Sigmoid colon (tissue), 7 donors: ENCODE measurements at regions of chr19 and their contacts with region 1.

Region 1: DNA sequence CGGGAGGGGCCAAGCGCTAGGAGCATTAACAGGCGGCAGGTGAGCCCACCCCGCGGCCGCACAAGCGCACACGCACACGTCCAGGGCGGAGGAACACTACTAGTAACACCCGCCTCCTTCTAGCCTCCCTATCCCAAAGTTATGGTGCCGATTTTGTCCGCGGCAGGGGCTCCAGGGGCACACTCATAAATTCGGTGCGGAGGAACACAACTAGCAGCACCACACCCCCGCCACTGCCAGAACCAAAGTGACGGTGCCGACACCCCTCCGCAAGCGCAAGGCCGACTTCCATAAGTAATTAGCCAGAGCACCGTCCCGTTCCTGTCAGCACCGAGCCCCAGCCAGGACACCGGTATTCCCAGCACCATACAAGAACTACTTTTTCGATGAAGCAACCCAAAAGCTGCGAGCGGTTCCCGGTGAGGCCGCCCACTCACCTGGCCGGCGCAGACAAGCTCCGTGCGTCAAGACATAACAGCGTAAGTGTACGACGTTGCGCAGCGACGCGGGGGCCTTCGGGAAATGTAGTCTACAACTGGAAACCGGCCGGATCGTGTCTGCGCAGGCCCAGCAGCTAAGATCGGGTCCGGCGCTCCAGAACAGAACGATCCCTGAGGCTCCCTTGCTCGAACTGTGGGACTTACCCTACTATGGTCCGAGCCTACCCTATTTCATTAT is at the starts of genes ZNF540 and ZNF571:
- DNase-seq: peak; percentile 97
- H3K4me3 ChIP-seq: peak within 1 kb of the TSS; percentile 53 to 88 (median 69)
- H3K27ac ChIP-seq: peak within 1 kb of the TSS; percentile 90 to 92 (median 92)
- H3K4me1 ChIP-seq: peaks cover 0 to 18% (median 17%) of the 10 kb centered on the region in 4 donors
- H3K27me3 ChIP-seq: no peaks in the 10 kb centered on the region
- CTCF ChIP-seq: no peak
- EP300 ChIP-seq: peak in 1 of 4 donors; percentile 88
- POLR2A ChIP-seq: peak; percentile 57 to 64
- total RNA-seq, gene ZNF540: 6.4 to 8.0 (median 7.1) TPM
- total RNA-seq, gene ZNF571: 3.1 to 11.4 (median 5.2) TPM

Region 2: GRCh38 chr19:37506387-37507166 is 87.9 kb before region 1 on chr19 and contains the start of gene ZNF793:
- intact Hi-C with region 1: loop called (anchors 5 kb)
- DNase-seq: peak; percentile 90
- H3K4me3 ChIP-seq: peak within 1 kb of the TSS; percentile 61 to 71 (median 67)
- H3K27ac ChIP-seq: peak within 1 kb of the TSS; percentile 88 to 95 (median 92)
- H3K4me1 ChIP-seq: peaks cover 0 to 15% (median 9%) of the 10 kb centered on the region in 4 donors
- H3K27me3 ChIP-seq: no peaks in the 10 kb centered on the region
- CTCF ChIP-seq: no peak
- EP300 ChIP-seq: no peak
- POLR2A ChIP-seq: peak in 1 of 2 donors; percentile 47
- total RNA-seq, gene ZNF793: 2.9 to 6.1 (median 5.4) TPM

Region 3: GRCh38 chr19:37551129-37551993 is 43.1 kb before region 1 on chr19:
- intact Hi-C with region 1: no loop called
- DNase-seq: no peak
- H3K4me3 ChIP-seq: peak overlapping the region in 2 of 4 donors; percentile 10 to 31
- H3K27ac ChIP-seq: no peak overlapping the region
- H3K4me1 ChIP-seq: no peaks in the 10 kb centered on the region
- H3K27me3 ChIP-seq: no peaks in the 10 kb centered on the region
- CTCF ChIP-seq: no peak
- EP300 ChIP-seq: no peak
- POLR2A ChIP-seq: no peak

Region 4: DNA sequence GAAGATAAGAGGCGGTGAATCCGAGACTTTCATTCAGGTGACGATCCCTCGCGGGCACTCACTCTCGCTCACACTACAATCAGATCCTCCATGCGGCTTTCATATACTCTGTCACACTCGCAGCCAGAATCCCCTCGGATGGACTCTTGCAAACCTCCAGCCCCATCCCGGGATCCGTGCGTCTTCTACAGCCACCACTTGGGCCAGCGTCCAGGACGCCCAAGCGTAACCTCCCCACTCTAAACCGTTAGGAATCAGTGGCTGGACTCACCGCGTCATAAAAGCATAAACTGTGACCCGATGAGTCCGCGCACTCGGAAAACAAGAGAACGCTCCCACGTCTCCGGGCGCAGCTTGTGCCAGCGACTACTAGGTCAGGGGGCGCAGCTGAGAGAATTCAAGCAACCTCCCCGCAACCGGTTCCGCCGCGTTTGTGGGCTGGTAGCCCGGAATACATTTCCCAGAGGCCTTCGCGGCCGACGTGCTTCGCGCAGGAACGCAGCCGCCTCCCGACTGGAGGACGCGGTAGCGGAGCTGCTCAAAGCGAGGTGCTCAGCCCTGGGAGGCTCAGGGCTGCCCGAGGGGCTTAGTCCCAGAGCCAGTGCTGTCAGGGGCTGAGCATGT is 97.5 kb after region 1 on chr19:
- intact Hi-C with region 1: loop called (anchors 5 kb)
- DNase-seq: peak; percentile 90
- H3K4me3 ChIP-seq: peak overlapping the region; percentile 59 to 63 (median 62)
- H3K27ac ChIP-seq: peak overlapping the region; percentile 82 to 88 (median 85)
- H3K4me1 ChIP-seq: peaks cover 0 to 9% (median 6%) of the 10 kb centered on the region in 4 donors
- H3K27me3 ChIP-seq: no peaks in the 10 kb centered on the region
- CTCF ChIP-seq: no peak
- EP300 ChIP-seq: no peak
- POLR2A ChIP-seq: peak in 1 of 2 donors; percentile 32

Region 5: DNA sequence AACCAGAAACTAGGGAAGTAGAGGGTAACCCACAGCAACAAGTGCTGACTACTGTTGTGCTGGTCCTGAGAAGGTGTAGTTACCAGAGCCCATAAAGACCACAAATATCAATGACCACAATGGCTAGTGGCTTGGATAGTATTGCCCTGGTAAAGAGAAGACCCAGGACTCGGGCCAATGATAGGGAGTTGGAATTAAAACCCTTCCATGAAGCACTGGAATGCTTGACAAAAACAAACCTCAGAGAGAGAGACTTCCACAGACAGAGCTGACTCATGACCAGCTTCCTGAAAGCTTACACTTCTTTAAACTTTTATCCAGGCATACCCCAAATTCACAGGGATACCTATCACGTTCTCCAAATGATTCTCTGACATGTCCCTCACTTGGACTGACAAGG is 251.5 kb after region 1 on chr19:
- intact Hi-C with region 1: no loop called
- DNase-seq: no peak
- H3K4me3 ChIP-seq: no peak overlapping the region
- H3K27ac ChIP-seq: no peak overlapping the region
- H3K4me1 ChIP-seq: no peaks in the 10 kb centered on the region
- H3K27me3 ChIP-seq: no peaks in the 10 kb centered on the region
- CTCF ChIP-seq: no peak
- EP300 ChIP-seq: no peak
- POLR2A ChIP-seq: no peak